ENCODE measurements at regions of chr20 and their contacts with region 1.

Region 1: DNA sequence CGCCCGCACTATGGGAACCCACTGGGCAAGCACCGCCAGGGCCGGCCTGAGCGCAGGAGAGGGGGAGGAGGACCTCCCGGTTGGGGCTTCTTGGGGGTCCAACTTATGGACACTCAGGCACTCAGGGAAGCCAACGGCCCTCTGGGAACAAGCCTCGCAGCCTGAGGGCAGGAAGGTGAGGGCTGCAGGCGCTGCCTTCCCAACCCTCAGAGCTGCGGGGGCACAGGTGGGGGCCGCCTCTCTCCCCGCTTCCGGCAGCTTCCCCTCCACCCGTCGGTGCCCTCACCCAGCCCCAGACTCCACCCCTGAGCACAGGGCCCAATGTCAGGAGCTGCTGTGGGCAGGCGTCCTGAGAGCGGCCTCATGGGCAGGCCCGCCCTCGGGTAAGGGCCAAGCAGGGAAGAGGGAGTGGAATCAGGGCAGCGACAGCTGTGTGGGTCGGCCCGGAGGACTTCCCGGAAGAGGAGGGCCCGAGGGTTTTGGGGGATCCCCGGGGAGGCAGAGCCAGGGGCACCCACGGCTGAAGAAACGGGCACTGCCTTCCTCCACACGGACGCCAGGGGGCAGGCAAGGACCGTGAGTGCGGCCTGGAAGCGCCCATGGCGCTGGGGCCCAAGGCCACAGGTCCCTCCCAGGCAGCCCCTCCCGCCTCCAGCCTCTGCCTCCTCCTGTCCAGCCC is 488 bp upstream of the PTK6 start:
- DNase-seq: peak; percentile 94
- H3K4me3 Mint-ChIP-seq: peak overlapping the region; percentile 70
- H3K27ac Mint-ChIP-seq: peak overlapping the region; percentile 90
- H3K4me1 Mint-ChIP-seq: peaks cover 12% of the 10 kb centered on the region
- H3K27me3 Mint-ChIP-seq: no peaks in the 10 kb centered on the region

Region 2: GRCh38 chr20:63520504-63520933 is 17.1 kb before region 1 on chr20 and contains the start of gene PPDPF:
- CTCF ChIA-PET with region 1: interaction called, 21 read pairs
- POLR2A ChIA-PET with region 1: no interaction called
- DNase-seq: peak; percentile 84
- H3K4me3 Mint-ChIP-seq: peak within 1 kb of the TSS; percentile 73
- H3K27ac Mint-ChIP-seq: peak within 1 kb of the TSS; percentile 90
- H3K4me1 Mint-ChIP-seq: peaks cover 12% of the 10 kb centered on the region
- H3K27me3 Mint-ChIP-seq: peaks cover 3% of the 10 kb centered on the region
- total RNA-seq, gene PPDPF: 167 to 193 TPM

Region 3: DNA sequence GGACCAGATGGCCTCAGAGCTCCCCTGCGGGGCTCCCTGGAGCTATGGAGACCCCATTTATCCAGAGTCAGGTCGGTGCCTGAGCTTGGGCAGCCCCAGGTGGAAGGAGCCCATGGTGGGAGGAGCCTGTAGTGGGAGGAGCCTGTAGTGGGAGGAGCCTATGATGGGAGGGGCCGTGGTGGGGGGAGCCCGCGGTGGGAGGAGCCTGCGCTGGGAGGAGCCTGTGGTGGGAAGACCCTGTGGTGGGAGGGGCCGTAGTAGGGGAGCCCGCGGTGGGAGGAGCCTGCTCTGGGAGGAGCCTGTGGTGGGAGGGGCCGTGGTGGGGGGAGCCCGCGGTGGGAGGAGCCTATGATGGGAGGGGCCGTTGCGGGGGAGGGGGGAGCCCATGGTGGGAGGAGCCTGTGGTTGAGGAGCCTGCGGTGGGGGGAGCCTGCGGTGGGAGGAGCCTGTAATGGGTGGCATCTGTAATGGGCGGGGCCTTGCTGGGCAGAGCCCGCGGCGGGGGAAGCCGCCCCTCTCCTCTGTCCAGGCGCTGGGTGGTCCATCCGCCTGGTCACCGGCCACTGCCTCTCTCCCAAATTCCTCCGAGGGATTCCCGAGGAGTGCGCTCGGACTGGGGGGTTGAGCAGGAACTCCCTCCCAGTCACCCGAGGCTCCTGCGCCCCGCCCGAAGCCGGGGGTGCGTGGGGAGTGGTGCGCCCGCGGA is 15.7 kb after region 1 on chr20:
- CTCF ChIA-PET with region 1: interaction called, 41 read pairs
- POLR2A ChIA-PET with region 1: no interaction called
- DNase-seq: peak; percentile 81
- H3K4me3 Mint-ChIP-seq: peak overlapping the region; percentile 41
- H3K27ac Mint-ChIP-seq: peak overlapping the region; percentile 90
- H3K4me1 Mint-ChIP-seq: peaks cover 17% of the 10 kb centered on the region
- H3K27me3 Mint-ChIP-seq: peaks cover 14% of the 10 kb centered on the region

Region 4: DNA sequence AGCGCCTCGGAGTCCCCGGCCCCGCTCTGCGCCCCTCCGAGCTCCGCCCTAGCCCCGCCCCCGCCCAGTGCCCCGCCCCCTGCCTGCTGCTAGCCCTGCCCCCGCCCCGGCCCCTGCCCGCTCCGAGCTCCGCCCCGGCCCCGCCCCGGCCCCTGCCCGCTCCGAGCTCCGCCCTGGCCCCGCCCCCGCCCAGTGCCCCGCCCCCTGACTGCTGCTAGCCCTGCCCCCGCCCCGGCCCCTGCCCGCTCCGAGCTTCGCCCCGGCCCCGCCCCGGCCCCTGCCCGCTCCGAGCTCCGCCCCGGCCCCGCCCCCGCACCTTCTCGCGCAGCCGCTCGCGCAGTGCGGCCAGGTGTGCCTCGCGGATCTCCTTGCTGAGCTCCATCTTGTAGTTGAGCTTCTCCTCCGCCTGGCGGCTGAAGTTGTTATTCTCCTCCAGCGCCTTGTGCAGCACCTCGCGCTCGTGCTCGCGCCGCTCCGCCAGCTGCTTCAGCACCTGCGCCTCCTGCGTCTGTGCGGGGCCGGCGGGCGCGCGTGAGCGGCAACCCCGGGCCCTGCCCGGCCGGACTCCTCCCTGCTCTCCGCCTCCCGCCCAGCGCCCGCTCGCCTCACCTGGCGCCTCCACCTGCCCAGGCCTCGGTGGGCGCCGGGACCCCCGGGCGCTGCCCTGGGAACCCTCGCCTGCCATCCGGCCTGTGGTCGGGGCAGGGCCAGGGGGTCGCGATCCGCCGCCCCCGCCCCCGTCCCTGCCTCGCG is 104.3 kb after region 1 on chr20:
- CTCF ChIA-PET with region 1: interaction called, 16 read pairs
- POLR2A ChIA-PET with region 1: no interaction called
- DNase-seq: peak; percentile 96
- H3K4me3 Mint-ChIP-seq: peak overlapping the region; percentile 74
- H3K27ac Mint-ChIP-seq: peak overlapping the region; percentile 88
- H3K4me1 Mint-ChIP-seq: peaks cover 25% of the 10 kb centered on the region
- H3K27me3 Mint-ChIP-seq: no peaks in the 10 kb centered on the region

Region 5: GRCh38 chr20:63739130-63740069 is 201.7 kb after region 1 on chr20 and contains the start of gene SLC2A4RG:
- CTCF ChIA-PET with region 1: interaction called, 12 read pairs
- POLR2A ChIA-PET with region 1: no interaction called
- DNase-seq: peak; percentile 68
- H3K4me3 Mint-ChIP-seq: peak within 1 kb of the TSS; percentile 87
- H3K27ac Mint-ChIP-seq: peak within 1 kb of the TSS; percentile 54
- H3K4me1 Mint-ChIP-seq: peaks cover 16% of the 10 kb centered on the region
- H3K27me3 Mint-ChIP-seq: no peaks in the 10 kb centered on the region
- total RNA-seq, gene SLC2A4RG: 105 to 129 TPM

Region 6: DNA sequence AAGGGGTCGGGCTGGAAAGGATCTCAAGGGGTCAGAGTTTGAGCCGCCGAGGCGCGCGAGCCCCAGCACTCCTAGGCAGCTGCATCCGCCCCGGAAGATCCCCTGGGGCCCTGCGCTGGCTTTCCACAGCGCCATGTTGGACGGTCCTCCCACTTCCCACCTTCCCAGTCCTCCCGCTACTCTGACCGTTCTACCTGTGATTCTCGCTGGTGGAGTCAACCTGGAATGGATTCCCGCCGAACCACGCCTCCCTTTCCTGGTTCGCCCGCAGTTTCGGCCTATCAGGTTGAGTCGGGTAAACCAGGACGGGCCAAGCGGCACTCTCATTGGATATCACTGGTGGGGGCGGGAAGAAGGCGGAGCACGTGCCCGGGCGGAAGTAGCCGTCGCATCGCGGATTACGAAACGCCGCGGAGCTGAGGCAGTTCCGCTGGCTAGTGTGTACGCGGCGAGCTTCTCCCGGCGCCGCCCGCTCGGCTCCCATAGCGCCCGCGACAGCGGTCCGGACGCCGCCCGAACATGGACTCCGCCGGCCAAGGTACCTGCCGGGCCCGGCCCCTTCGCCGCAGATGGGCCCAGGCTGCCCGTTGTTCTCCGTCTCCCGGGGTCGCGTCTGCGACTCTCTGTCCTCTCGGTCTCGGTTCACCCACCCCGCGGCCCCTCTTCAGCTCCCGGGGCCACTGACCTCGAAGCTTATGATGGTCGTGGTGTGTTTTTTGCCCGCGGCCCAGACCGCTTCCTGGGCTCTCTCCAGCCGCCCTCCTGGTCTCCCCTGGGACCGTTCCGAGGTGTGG is 327.4 kb after region 1 on chr20 and contains the start of gene TPD52L2:
- CTCF ChIA-PET with region 1: interaction called, 12 read pairs
- POLR2A ChIA-PET with region 1: no interaction called
- DNase-seq: peak; percentile 99
- H3K4me3 Mint-ChIP-seq: peak within 1 kb of the TSS; percentile 89
- H3K27ac Mint-ChIP-seq: peak within 1 kb of the TSS; percentile 94
- H3K4me1 Mint-ChIP-seq: peaks cover 30% of the 10 kb centered on the region
- H3K27me3 Mint-ChIP-seq: no peaks in the 10 kb centered on the region
- total RNA-seq, gene TPD52L2: 39.6 to 41.6 TPM

Region 7: GRCh38 chr20:63980806-63981728 is 443.4 kb after region 1 on chr20 and contains the start of gene PRPF6:
- CTCF ChIA-PET with region 1: interaction called, 11 read pairs
- POLR2A ChIA-PET with region 1: no interaction called
- DNase-seq: peak; percentile 96
- H3K4me3 Mint-ChIP-seq: peak within 1 kb of the TSS; percentile 94
- H3K27ac Mint-ChIP-seq: peak within 1 kb of the TSS; percentile 98
- H3K4me1 Mint-ChIP-seq: peaks cover 62% of the 10 kb centered on the region
- H3K27me3 Mint-ChIP-seq: no peaks in the 10 kb centered on the region
- total RNA-seq, gene PRPF6: 67.1 to 70.8 TPM